Posterior vena cava (tissue), 2 donors: ENCODE measurements at regions of chr7 and their contacts with region 1.

Region 1: DNA sequence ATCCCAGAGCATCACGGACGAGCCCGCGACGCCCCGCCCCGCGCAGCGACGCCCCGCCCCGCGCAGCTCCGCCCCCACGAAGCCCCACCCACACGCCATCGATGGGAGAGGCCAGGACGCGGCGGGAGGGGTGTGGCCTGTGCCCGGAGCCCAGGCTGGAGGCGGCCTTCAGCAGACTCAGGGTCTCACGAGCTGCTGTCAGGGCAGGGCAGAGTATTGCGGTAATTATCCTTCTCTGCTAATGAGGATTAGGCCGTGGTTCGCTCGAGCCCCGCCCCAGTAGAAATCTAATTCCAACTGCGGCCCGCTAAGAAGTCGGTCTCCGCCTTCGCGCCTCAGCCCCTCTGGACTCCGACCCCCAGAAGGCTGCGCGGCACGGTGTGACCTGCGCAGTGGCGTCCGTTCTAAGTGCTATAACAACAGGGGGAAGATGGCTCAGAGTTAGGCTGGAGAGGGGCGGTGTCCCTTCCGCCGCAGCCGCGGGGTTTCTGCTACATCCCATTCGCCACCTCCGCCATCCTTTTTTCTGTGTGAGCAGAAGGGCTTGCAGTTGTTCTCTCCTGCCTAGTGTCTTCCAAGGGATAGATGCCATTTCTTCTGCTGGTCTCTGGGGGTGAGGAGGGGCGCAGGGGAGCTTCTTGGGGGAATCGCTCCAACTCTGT is 337 bp upstream of the NT5C3A start:
- DNase-seq: peak; percentile 98

Region 2: DNA sequence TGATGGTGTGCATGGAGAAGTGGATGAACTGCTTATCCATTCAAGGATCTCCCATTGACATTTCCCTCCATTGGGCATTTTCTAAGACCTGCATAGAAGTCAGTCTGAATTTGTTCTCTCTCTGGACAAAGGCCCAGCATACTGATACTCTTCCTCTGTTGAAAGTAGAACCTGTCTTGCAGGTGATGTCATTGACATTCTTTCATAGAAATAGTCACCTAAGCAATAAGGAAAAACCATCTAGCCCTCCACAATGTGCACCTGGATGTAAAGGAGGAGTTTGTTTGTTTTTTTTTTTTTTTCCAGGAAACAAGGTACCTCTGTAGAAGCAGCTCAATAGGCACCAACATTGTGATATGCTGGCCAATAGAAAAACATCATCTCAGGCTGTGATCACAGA is 1823.9 kb after region 1 on chr7:
- intact Hi-C with region 1: loop called in 1 of 2 experiments (anchors 5 kb)
- DNase-seq: no peak